ENCODE measurements at regions of chr12 and their contacts with region 1.

Region 1: DNA sequence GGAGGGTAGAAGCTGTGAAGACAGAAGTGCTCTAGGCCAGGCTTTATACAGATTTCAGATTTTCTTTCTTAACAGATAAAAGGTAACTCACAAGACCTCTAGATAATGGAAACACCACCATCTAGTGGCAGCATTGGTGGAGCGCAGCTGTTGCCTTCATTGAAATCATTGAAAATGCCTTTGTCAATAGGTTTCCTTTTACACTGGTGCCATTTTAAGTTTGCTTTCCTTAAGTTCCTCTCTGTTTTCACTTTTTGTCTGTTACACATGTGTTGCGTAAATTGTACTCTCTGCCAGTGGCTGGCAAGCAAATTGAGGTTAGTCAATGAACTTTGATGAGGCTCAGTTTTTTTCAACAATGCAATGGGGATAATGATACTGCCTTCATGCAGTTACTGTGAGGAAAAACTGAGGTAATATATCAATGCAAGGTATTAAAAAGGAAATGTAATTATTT is 31.1 kb downstream of the ALDH1L2 start:
- DNase-seq: peak; percentile 65 to 70
- H3K4me3 ChIP-seq: no peak overlapping the region
- H3K27ac ChIP-seq: no peak overlapping the region
- H3K4me1 ChIP-seq: no peaks in the 10 kb centered on the region
- H3K27me3 ChIP-seq: no peaks in the 10 kb centered on the region
- CTCF ChIP-seq: peak; percentile 92

Region 2: GRCh38 chr12:103884316-103884715 is 1168.8 kb before region 1 on chr12:
- CTCF ChIA-PET with region 1: no interaction called
- POLR2A ChIA-PET with region 1: no interaction called
- intact Hi-C with region 1: loop called (anchors 1 kb)
- DNase-seq: no peak
- H3K4me3 ChIP-seq: no peak overlapping the region
- H3K27ac ChIP-seq: no peak overlapping the region
- H3K4me1 ChIP-seq: peaks cover 7% of the 10 kb centered on the region; the same call in 1 of the 2 replicates
- H3K27me3 ChIP-seq: no peaks in the 10 kb centered on the region
- CTCF ChIP-seq: peak; percentile 62

Region 3: DNA sequence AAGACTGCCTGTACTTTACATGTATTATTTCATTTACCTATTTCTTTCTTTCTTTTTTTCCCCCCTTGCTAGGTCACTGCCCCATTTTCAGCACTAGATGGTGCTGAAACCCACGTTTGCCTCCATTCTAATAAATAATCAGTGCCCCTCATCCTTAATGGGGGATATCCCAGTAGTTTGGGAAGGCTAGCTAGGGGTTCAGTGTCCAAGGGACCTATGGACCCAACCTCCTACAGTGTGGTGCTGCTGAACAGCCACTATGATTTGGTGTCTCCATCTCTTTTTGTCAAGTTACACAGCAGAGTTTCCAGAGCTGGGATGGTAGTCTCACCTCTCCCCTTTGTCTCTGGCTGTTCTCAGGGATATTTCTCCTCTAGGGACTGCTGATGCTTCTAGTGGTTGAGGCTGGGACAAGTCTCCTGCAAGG is 995.4 kb before region 1 on chr12:
- CTCF ChIA-PET with region 1: no interaction called
- POLR2A ChIA-PET with region 1: no interaction called
- intact Hi-C with region 1: loop called (anchors 5 kb)
- DNase-seq: peak in 1 of 2 experiments; percentile 32
- H3K4me3 ChIP-seq: no peak overlapping the region
- H3K27ac ChIP-seq: no peak overlapping the region
- H3K4me1 ChIP-seq: peaks cover 15% of the 10 kb centered on the region; the same call in 1 of the 2 replicates
- H3K27me3 ChIP-seq: no peaks in the 10 kb centered on the region
- CTCF ChIP-seq: peak; percentile 82

Measured in PC-9 (cell line).